Mucosa of descending colon (tissue), 3 donors: ENCODE measurements at regions of chr15 and their contacts with region 1.

Region 1: GRCh38 chr15:90145259-90145658 is 43.0 kb upstream of the IDH2 start:
- DNase-seq: no peak
- ATAC-seq: no peak
- H3K4me3 ChIP-seq: no peak overlapping the region
- H3K4me1 ChIP-seq: peaks cover 11% of the 10 kb centered on the region
- CTCF ChIP-seq: no peak

Region 2: DNA sequence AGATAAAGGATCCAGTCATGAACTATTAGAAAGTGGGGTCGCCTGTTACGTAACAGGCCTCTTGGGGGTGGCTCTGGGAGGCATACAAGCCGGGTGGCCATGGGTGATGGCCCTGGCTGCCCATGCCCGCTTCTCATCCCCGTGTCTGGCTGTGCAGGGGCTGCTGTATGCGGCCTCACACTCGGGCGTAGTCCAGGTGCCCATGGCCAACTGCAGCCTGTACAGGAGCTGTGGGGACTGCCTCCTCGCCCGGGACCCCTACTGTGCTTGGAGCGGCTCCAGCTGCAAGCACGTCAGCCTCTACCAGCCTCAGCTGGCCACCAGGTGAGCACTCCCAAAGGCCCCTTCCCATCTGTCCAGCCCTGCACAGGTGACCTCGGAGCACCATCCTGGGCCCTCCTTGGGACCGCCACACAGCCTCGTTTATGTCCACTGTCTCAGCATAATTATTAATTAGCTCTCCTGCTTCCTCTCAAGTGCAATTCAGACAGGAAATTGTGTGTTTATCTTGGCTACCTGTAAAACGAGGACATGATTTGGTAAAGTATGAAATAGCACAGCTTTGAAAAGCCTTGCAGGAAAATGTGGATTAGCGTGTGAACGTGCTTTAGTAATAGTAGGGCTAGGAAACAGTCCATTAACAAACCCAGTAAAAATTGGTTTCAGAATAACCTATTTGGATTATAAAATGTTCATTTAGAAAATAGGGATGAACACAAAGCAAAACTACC is 80.4 kb after region 1 on chr15:
- intact Hi-C with region 1: loop called in 1 of 2 experiments (anchors 5 kb)
- DNase-seq: peak in 1 of 3 donors; percentile 50
- ATAC-seq: no peak
- H3K4me3 ChIP-seq: no peak overlapping the region
- H3K4me1 ChIP-seq: peaks cover 13% of the 10 kb centered on the region
- CTCF ChIP-seq: no peak